ENCODE measurements at regions of chr14 and their contacts with region 1.

Region 1: DNA sequence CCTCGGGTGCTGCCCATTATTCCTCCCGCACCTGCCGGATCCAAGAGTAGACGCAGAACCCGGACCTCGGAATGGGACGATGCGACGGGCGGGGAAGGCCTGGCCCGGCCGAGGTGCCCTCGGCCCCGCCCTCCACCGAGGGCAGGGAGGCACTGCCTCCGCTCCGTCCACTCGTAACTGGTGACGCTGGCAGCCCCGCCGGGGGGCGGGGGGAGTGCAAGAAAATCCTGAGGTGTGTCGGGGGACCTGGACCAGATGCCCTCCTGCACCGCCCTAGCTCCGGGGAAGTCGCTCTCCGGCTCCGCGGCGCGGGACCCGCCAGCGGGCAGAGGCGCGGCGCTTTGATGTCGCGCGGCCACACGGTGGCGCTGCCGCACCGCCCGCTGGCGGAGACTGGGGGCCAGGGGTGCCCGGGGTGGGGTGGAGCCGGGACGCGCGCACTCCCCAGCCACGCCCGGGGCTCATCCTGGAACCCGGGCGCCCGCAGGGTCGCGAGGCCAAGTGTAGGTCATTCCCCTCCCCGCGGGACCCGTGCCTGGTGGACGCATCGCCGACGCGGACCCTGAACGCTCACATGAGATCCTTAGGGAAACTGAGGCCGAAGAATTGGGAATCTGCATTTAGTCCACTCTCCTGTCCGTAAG is 202.8 kb downstream of the TTC8 start:
- DNase-seq: peak; percentile 13
- ATAC-seq: peak; percentile 91
- H3K4me3 ChIP-seq: peak overlapping the region; percentile 40 to 59
- H3K27ac ChIP-seq: no peak overlapping the region; the same call in 1 of the 2 replicates
- H3K4me1 ChIP-seq: peaks cover 2 to 11% of the 10 kb centered on the region in 2 experiments; a peak in 3 of 4 replicates
- H3K27me3 ChIP-seq: no peaks in the 10 kb centered on the region
- CTCF ChIP-seq: peak; percentile 43 to 78 (median 76); a peak in 5 of 6 replicates
- POLR2A ChIP-seq: no peak
- RAD21 ChIP-seq: peak; percentile 73

Region 2: GRCh38 chr14:89899917-89900663 is 872.9 kb after region 1 on chr14:
- CTCF ChIA-PET with region 1: no interaction called
- POLR2A ChIA-PET with region 1: no interaction called
- RAD21 ChIA-PET with region 1: no interaction called
- intact Hi-C with region 1: loop called (anchors 2 kb)
- DNase-seq: peak; percentile 13
- ATAC-seq: peak; percentile 85
- H3K4me3 ChIP-seq: no peak overlapping the region
- H3K27ac ChIP-seq: no peak overlapping the region
- H3K4me1 ChIP-seq: no peaks in the 10 kb centered on the region
- H3K27me3 ChIP-seq: no peaks in the 10 kb centered on the region
- CTCF ChIP-seq: peak; percentile 40 to 73 (median 56); a peak in 4 of 6 replicates
- POLR2A ChIP-seq: no peak
- RAD21 ChIP-seq: peak; percentile 61

Region 3: GRCh38 chr14:89915114-89915878 is 888.1 kb after region 1 on chr14:
- CTCF ChIA-PET with region 1: no interaction called
- POLR2A ChIA-PET with region 1: no interaction called
- RAD21 ChIA-PET with region 1: no interaction called
- intact Hi-C with region 1: loop called (anchors 5 kb)
- DNase-seq: peak; percentile 57
- ATAC-seq: peak; percentile 68; the same call in 1 of the 2 replicates
- H3K4me3 ChIP-seq: no peak overlapping the region
- H3K27ac ChIP-seq: no peak overlapping the region
- H3K4me1 ChIP-seq: no peaks in the 10 kb centered on the region
- H3K27me3 ChIP-seq: no peaks in the 10 kb centered on the region
- CTCF ChIP-seq: peak; percentile 65 to 95 (median 90); a peak in 5 of 6 replicates
- POLR2A ChIP-seq: no peak
- RAD21 ChIP-seq: peak; percentile 82